ENCODE measurements at regions of chr18 and their contacts with region 1.

Region 1: GRCh38 chr18:23131693-23132319 is 3.5 kb upstream of the CABLES1 start:
- DNase-seq: peak; percentile 87
- H3K4me3 ChIP-seq: no peak overlapping the region
- H3K27ac ChIP-seq: no peak overlapping the region
- H3K4me1 ChIP-seq: no peaks in the 10 kb centered on the region
- H3K27me3 ChIP-seq: no peaks in the 10 kb centered on the region
- CTCF ChIP-seq: peak; percentile 84 to 90 (median 88)
- POLR2A ChIP-seq: no peak

Region 2: DNA sequence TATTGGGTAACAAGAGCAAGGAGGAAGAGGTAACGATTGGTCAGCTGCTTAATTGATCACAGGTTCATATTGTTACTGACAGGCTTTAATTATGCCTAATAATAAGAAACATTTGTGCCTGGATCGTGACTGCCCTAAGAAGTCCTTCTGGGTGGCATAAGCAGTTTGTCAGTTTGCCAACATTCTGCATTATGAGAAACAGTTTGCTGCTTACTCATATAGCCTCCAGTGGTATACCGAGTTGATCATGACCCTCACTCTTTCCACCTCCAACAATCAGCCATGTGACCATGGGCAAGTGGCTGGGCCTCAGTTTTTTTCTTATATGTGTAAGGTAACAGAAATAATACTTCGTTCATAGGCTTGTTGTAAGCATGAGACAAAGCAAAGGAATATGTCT is 93.1 kb before region 1 on chr18:
- intact Hi-C with region 1: no loop called
- DNase-seq: no peak
- H3K4me3 ChIP-seq: no peak overlapping the region
- H3K27ac ChIP-seq: no peak overlapping the region
- H3K4me1 ChIP-seq: no peaks in the 10 kb centered on the region
- H3K27me3 ChIP-seq: no peaks in the 10 kb centered on the region
- CTCF ChIP-seq: no peak
- POLR2A ChIP-seq: no peak

Region 3: DNA sequence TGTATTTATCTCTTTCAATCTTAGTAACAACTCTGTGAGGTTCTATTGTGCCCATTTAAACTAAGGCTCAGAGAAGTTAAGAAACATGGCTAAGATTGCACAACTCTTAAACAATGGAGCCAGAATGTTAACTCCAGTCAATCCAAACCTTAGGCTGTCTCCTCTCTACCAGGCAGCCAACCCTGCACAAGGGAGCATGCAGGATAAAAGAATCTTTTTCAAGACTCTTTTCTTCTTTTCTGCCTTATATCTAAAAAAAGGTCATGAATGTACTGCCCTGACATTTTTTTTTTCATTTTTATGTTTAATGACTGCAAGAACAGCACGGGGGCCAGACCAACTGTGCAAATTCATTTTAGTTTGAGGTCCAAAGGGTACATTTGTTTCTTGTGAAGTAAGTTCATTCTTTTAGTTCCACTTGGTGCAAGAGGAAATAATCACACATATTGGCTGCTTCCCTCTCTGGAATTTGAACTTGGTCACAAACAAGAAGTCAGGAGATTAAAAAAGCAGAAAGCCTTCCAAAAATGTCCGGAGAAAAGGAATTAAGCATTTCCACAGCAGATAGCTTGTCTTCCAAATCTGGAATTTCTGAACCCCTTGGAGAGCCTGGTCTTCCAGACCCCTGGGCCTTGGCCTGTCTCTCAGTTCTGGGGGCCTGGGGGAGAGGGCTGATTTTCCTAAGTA is 225.3 kb after region 1 on chr18:
- intact Hi-C with region 1: loop called (anchors 10 kb)
- DNase-seq: peak; percentile 27
- H3K4me3 ChIP-seq: no peak overlapping the region
- H3K27ac ChIP-seq: peak overlapping the region in 1 of 2 donors; percentile 41
- H3K4me1 ChIP-seq: peaks cover 13% of the 10 kb centered on the region
- H3K27me3 ChIP-seq: no peaks in the 10 kb centered on the region
- CTCF ChIP-seq: no peak
- POLR2A ChIP-seq: no peak

Region 4: GRCh38 chr18:23401400-23402347 is 269.9 kb after region 1 on chr18:
- intact Hi-C with region 1: loop called (anchors 10 kb)
- DNase-seq: peak; percentile 25
- H3K4me3 ChIP-seq: no peak overlapping the region
- H3K27ac ChIP-seq: peak overlapping the region in 1 of 2 donors; percentile 6
- H3K4me1 ChIP-seq: peaks cover 3% of the 10 kb centered on the region
- H3K27me3 ChIP-seq: no peaks in the 10 kb centered on the region
- CTCF ChIP-seq: no peak
- POLR2A ChIP-seq: no peak

Measured in testis (tissue), 5 donors.